Heart right ventricle (tissue), 16 donors: ENCODE measurements at regions of chr3 and their contacts with region 1.

Region 1: DNA sequence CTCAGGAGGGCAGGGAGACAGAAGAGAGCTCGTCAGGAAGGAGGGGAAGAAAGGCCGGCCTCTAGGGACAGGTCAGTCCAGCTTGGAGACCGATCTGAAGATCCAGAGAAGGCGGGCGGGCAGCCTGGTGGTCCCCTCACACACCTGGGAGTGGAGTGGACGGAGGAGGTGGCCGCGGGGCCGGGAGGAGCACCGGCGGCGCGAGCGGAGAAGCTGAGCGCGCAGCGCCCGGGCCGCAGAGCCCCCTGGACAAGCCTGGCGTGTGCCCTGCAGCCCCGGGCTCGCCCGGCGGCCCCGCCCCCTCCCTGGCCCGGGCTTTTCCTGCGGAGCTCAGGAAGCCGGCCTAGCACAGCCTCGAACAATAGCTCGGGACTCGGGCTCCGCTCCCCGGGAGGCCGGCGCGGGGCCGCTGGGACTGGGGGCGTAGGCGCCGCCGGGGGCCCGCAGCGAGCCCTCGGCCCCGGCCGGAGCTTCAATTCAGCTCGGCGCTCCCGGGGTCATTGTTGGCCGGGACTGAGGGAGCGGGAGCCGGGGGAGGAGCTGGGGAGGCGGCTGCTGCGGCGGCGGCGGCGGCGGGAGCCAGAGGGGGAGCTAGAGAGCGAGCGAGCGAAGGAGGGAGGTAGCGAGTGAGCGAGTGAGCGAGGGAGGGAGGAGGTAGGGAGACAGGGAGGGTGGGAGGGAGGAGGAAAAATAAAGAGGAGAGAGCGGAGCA is 40.9 kb upstream of the ROPN1 start:
- DNase-seq: peak; percentile 88 to 90
- ATAC-seq: peak; percentile 91 to 96 (median 95)
- H3K4me3 ChIP-seq: peak overlapping the region; percentile 69 to 96 (median 92)
- H3K27ac ChIP-seq: peak overlapping the region; percentile 87 to 97 (median 92)
- H3K4me1 ChIP-seq: peaks cover 0 to 27% (median 18%) of the 10 kb centered on the region in 9 donors
- H3K27me3 ChIP-seq: peaks cover 0 to 86% (median 0%) of the 10 kb centered on the region in 7 donors
- CTCF ChIP-seq: peak; percentile 62 to 86 (median 82)

Region 2: DNA sequence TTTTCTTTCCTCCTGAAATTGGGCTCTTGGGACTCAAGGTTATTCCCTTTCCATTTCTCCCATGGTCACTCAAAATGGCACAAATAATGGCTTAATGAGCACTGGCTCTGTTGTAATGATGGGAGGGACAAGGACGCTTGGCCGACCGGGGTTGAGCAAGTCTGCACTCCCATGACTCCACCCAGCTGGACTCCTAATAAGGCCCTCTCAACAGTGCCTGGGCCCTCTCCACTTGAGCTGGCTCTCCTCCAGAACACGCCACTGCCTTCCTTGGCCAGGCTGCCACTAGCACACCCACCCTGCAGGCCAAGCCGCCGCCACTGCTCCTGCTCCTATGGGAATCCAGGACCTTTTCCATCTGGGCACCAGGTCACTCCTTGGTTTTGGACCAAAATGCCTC is 626.2 kb before region 1 on chr3:
- intact Hi-C with region 1: no loop called
- DNase-seq: peak; percentile 82 to 89
- ATAC-seq: peak; percentile 74 to 88 (median 79)
- H3K4me3 ChIP-seq: no peak overlapping the region
- H3K27ac ChIP-seq: peak overlapping the region; percentile 43 to 94 (median 83)
- H3K4me1 ChIP-seq: peaks cover 15 to 100% (median 65%) of the 10 kb centered on the region in 9 donors
- H3K27me3 ChIP-seq: no peaks in the 10 kb centered on the region
- CTCF ChIP-seq: no peak

Region 3: DNA sequence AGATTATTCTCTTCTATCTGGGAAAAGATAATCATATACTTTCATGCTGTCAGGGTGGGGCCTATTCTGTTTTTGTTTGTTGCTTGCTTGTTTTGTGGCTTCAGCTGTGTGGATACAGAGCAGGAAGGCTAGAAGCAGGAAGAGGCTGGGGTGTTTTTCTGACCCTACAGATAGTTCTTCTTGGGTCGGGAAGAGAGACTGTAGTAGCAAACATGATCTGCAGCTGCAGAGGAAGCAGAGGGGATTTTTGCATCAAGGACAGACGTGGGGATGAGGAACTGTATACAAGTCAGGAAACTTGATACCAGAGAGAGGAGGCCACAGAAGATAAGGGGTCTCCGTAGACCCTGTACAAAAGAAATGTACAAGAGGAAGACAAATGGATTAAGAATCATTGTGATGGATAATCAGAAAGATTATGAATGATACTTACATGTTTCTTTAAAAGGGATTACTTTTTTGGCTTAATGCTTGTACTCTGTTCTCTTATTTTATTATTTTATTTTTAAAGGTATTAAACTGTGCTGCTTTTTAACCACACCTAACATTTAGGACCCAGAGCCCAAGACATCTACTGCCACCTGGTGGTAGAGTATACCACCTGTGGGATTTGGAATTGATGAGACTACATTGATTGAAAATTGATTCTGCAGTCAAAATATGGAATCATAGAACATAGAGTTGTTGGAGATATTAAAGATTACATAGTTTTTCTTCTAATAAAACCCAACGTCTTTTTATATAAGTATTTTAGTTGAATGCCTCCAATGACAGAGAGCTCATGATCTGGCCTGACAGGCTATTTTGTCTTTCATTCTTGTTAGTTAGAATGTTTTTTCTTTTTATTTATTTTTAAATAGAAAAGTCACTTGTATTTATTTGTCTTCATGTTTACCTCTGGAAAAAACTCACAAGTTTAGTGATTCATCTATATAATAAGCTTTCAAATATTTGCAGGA is 46.4 kb after region 1 on chr3:
- intact Hi-C with region 1: loop called (anchors 1 to 5 kb)
- DNase-seq: no peak
- ATAC-seq: peak in 5 of 8 donors; percentile 36 to 63 (median 54)
- H3K4me3 ChIP-seq: no peak overlapping the region
- H3K27ac ChIP-seq: peak overlapping the region in 4 of 10 donors; percentile 13 to 49 (median 26)
- H3K4me1 ChIP-seq: peaks cover 0 to 63% (median 36%) of the 10 kb centered on the region in 9 donors
- H3K27me3 ChIP-seq: no peaks in the 10 kb centered on the region
- CTCF ChIP-seq: peak; percentile 69 to 87 (median 80)

Region 4: GRCh38 chr3:124084022-124084881 is 51.4 kb after region 1 on chr3:
- intact Hi-C with region 1: loop called (anchors 1 to 5 kb)
- DNase-seq: peak in 1 of 2 donors; percentile 55
- ATAC-seq: peak in 7 of 8 donors; percentile 34 to 84 (median 67)
- H3K4me3 ChIP-seq: no peak overlapping the region
- H3K27ac ChIP-seq: peak overlapping the region in 9 of 10 donors; percentile 15 to 51 (median 38)
- H3K4me1 ChIP-seq: peaks cover 0 to 41% (median 16%) of the 10 kb centered on the region in 9 donors
- H3K27me3 ChIP-seq: no peaks in the 10 kb centered on the region
- CTCF ChIP-seq: no peak

Region 5: GRCh38 chr3:124246949-124247348 is 214.1 kb after region 1 on chr3:
- intact Hi-C with region 1: no loop called
- DNase-seq: no peak
- ATAC-seq: no peak
- H3K4me3 ChIP-seq: no peak overlapping the region
- H3K27ac ChIP-seq: peak overlapping the region in 8 of 10 donors; percentile 15 to 98 (median 88)
- H3K4me1 ChIP-seq: peaks cover 22 to 63% (median 30%) of the 10 kb centered on the region in 9 donors
- H3K27me3 ChIP-seq: no peaks in the 10 kb centered on the region
- CTCF ChIP-seq: peak in 8 of 9 donors; percentile 7 to 62 (median 46)

Region 6: GRCh38 chr3:124276133-124276532 is 243.3 kb after region 1 on chr3:
- intact Hi-C with region 1: loop called in 7 of 10 experiments (anchors 1 to 5 kb)
- DNase-seq: no peak
- ATAC-seq: peak in 4 of 8 donors; percentile 1 to 30 (median 6)
- H3K4me3 ChIP-seq: no peak overlapping the region
- H3K27ac ChIP-seq: peak overlapping the region; percentile 80 to 94 (median 86)
- H3K4me1 ChIP-seq: peaks cover 26 to 92% (median 56%) of the 10 kb centered on the region in 9 donors
- H3K27me3 ChIP-seq: no peaks in the 10 kb centered on the region
- CTCF ChIP-seq: no peak